HEK293 (cell line): ENCODE measurements at regions of chr2 and their contacts with region 1.

Region 1: GRCh38 chr2:3651691-3652648 is 6.0 kb upstream of the ALLC start:
- H3K4me3 ChIP-seq: no peak overlapping the region
- H3K27ac ChIP-seq: no peak overlapping the region
- H3K4me1 ChIP-seq: no peaks in the 10 kb centered on the region
- CTCF ChIP-seq: no peak

Region 2: GRCh38 chr2:3433339-3433699 is 218.7 kb before region 1 on chr2:
- CTCF ChIA-PET with region 1: no interaction called
- POLR2A ChIA-PET with region 1: no interaction called
- H3K4me3 ChIP-seq: no peak overlapping the region
- H3K27ac ChIP-seq: no peak overlapping the region
- H3K4me1 ChIP-seq: no peaks in the 10 kb centered on the region
- CTCF ChIP-seq: no peak

Region 3: DNA sequence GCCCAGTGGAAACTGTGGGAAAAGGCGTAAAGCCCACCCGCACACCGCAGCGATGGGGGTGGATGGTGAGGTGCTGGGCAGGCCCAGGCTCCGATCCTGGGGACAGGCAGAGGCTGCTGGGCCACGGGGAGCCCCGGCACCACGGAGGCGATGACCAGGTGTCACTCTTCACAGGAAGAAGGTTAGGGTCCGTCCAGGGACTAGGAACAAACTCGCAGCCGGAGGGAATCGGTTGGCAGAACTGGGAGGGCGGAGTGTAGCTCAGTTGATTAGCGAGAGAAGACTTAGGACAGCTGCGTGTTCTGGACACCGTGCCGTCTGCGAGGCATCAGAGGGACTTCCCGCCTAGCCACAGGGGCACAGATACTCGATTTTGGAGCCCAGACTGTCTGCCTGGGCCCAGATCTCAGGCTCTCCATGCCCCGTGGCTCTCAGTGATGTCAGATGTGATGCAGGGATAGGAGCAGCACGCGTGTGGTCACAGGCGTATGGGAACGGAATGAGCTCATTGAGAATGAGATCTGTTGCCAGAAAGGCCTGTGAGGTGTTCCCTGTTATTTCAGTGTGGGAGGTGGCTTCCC is 10.0 kb before region 1 on chr2:
- CTCF ChIA-PET with region 1: interaction called, 11 read pairs
- POLR2A ChIA-PET with region 1: no interaction called
- H3K4me3 ChIP-seq: no peak overlapping the region
- H3K27ac ChIP-seq: no peak overlapping the region
- H3K4me1 ChIP-seq: no peaks in the 10 kb centered on the region
- CTCF ChIP-seq: no peak

Region 4: GRCh38 chr2:3670941-3671340 is 19.0 kb after region 1 on chr2:
- CTCF ChIA-PET with region 1: no interaction called
- POLR2A ChIA-PET with region 1: no interaction called
- H3K4me3 ChIP-seq: no peak overlapping the region
- H3K27ac ChIP-seq: no peak overlapping the region
- H3K4me1 ChIP-seq: no peaks in the 10 kb centered on the region
- CTCF ChIP-seq: no peak